Caco-2 (cell line): ENCODE measurements at regions of chr3 and their contacts with region 1.

Region 1: GRCh38 chr3:119206611-119207511 is 33.5 kb downstream of the UPK1B start:
- DNase-seq: peak in 1 of 2 experiments; percentile 10
- H3K4me3 ChIP-seq: no peak overlapping the region
- H3K4me3 Mint-ChIP-seq: no peak overlapping the region
- H3K27ac Mint-ChIP-seq: no peak overlapping the region
- H3K4me1 ChIP-seq: peaks cover 29% of the 10 kb centered on the region
- H3K4me1 Mint-ChIP-seq: peaks cover 15% of the 10 kb centered on the region
- H3K27me3 ChIP-seq: no peaks in the 10 kb centered on the region; the same call in 1 of the 2 replicates
- H3K27me3 Mint-ChIP-seq: no peaks in the 10 kb centered on the region
- CTCF ChIP-seq: no peak

Region 2: DNA sequence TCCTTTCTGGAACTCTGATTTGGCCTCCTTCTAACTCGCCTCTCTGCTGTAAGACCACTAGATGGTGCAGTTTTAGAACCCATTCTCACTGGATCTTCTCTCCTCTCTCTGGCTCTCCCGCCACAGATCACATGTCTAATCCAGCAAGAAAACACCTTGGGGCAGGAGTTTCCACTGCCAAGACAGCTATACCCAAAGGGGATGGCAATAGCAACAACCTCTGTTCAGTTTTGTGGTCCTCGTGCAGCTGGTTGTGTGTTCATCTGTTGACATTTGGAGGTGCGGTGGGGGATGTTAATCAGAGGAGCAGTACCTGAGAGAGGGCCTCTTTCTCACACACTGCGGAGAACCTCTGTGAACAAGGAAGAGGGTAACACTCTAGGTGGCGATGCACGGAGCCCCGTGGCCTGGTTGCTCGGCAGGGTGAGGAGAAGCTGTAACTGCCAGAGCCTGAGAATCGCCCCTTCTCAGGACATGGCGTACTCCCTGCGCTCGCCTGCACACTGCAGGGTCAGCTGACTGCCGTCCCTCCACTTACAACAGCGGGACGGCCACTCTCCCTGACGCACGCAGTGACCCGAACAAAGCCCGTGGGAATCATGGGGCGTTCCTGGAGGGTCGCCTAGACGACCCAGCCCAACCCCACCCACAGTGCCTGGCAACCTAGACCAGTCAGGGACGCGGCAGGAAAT is 61.2 kb before region 1 on chr3 and contains the start of gene TEX55:
- CTCF ChIA-PET with region 1: no interaction called
- POLR2A ChIA-PET with region 1: no interaction called
- intact Hi-C with region 1: loop called (anchors 1 kb)
- DNase-seq: peak; percentile 51 to 58
- H3K4me3 ChIP-seq: no peak within 1 kb of the TSS
- H3K4me3 Mint-ChIP-seq: no peak within 1 kb of the TSS
- H3K27ac Mint-ChIP-seq: no peak within 1 kb of the TSS
- H3K4me1 ChIP-seq: peaks cover 10% of the 10 kb centered on the region; the same call in 1 of the 2 replicates
- H3K4me1 Mint-ChIP-seq: peaks cover 6% of the 10 kb centered on the region
- H3K27me3 ChIP-seq: no peaks in the 10 kb centered on the region
- H3K27me3 Mint-ChIP-seq: no peaks in the 10 kb centered on the region
- CTCF ChIP-seq: peak; percentile 62 to 74
- total RNA-seq, gene TEX55: not detected in 2 replicates

Region 3: DNA sequence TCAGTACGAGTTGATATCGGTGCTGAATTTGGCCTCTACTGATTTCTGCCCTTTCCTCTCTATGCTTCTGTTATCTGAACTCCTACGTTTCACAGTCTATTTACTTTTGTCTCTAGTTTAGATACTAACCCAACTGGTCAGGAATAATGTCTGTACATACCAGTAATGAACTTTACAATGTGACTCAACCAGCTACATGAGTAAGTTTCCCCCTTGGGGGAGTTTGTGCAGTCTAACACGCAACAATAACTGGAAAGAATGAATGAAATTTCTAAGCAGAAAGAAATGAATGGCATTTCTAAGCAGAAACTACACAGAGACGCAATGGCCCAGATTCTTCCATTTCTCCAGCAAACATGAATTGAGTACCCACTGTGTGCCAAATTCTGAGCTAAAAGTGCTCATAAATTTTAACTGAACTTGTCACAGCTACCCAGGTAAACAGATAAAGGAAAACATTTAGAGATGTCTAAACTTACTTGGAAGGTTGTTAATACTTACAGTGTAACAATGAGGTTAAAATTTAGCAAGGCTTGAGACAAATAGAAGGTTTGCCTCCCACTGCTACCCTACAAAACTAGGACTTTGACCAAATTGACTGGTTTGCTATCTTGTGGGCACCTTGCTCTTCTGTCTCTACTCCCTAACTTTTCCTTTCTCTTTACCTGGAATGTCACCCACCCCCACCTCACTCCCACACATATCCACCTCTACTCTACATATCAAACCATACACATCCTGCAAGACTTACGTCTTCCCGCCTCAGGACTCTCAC is 21.9 kb before region 1 on chr3:
- CTCF ChIA-PET with region 1: no interaction called
- POLR2A ChIA-PET with region 1: interaction called, 11 read pairs
- intact Hi-C with region 1: loop called (anchors 1 kb)
- DNase-seq: peak; percentile 58 to 62
- H3K4me3 ChIP-seq: no peak overlapping the region
- H3K4me3 Mint-ChIP-seq: peak overlapping the region; percentile 14
- H3K27ac Mint-ChIP-seq: peak overlapping the region; percentile 49
- H3K4me1 ChIP-seq: peaks cover 65% of the 10 kb centered on the region
- H3K4me1 Mint-ChIP-seq: peaks cover 38% of the 10 kb centered on the region
- H3K27me3 ChIP-seq: no peaks in the 10 kb centered on the region
- H3K27me3 Mint-ChIP-seq: no peaks in the 10 kb centered on the region
- CTCF ChIP-seq: no peak

Region 4: GRCh38 chr3:119257682-119258410 is 51.0 kb after region 1 on chr3:
- CTCF ChIA-PET with region 1: no interaction called
- POLR2A ChIA-PET with region 1: no interaction called
- intact Hi-C with region 1: loop called (anchors 1 kb)
- DNase-seq: peak; percentile 57 to 68
- H3K4me3 ChIP-seq: peak overlapping the region; percentile 16; the same call in 1 of the 2 replicates
- H3K4me3 Mint-ChIP-seq: peak overlapping the region; percentile 76
- H3K27ac Mint-ChIP-seq: peak overlapping the region; percentile 97
- H3K4me1 ChIP-seq: peaks cover 24% of the 10 kb centered on the region
- H3K4me1 Mint-ChIP-seq: peaks cover 17% of the 10 kb centered on the region
- H3K27me3 ChIP-seq: no peaks in the 10 kb centered on the region
- H3K27me3 Mint-ChIP-seq: no peaks in the 10 kb centered on the region
- CTCF ChIP-seq: no peak

Region 5: GRCh38 chr3:119346076-119346496 is 139.2 kb after region 1 on chr3:
- CTCF ChIA-PET with region 1: interaction called, 10 read pairs
- POLR2A ChIA-PET with region 1: no interaction called
- intact Hi-C with region 1: no loop called
- DNase-seq: peak in 1 of 2 experiments; percentile 14
- H3K4me3 ChIP-seq: no peak overlapping the region
- H3K4me3 Mint-ChIP-seq: no peak overlapping the region
- H3K27ac Mint-ChIP-seq: no peak overlapping the region
- H3K4me1 ChIP-seq: peaks cover 35% of the 10 kb centered on the region
- H3K4me1 Mint-ChIP-seq: peaks cover 33% of the 10 kb centered on the region
- H3K27me3 ChIP-seq: no peaks in the 10 kb centered on the region
- H3K27me3 Mint-ChIP-seq: no peaks in the 10 kb centered on the region
- CTCF ChIP-seq: peak in 1 of 2 experiments; percentile 5

Region 6: GRCh38 chr3:119810018-119810435 is 603.2 kb after region 1 on chr3:
- CTCF ChIA-PET with region 1: no interaction called
- POLR2A ChIA-PET with region 1: no interaction called
- intact Hi-C with region 1: no loop called
- DNase-seq: no peak
- H3K4me3 ChIP-seq: no peak overlapping the region
- H3K4me3 Mint-ChIP-seq: no peak overlapping the region
- H3K27ac Mint-ChIP-seq: no peak overlapping the region
- H3K4me1 ChIP-seq: no peaks in the 10 kb centered on the region
- H3K4me1 Mint-ChIP-seq: no peaks in the 10 kb centered on the region
- H3K27me3 ChIP-seq: no peaks in the 10 kb centered on the region
- H3K27me3 Mint-ChIP-seq: no peaks in the 10 kb centered on the region
- CTCF ChIP-seq: no peak